ENCODE measurements at regions of chr17 and their contacts with region 1.

Region 1: GRCh38 chr17:44199553-44200477 is at the start of gene ATXN7L3:
- DNase-seq: peak in 1 of 2 donors; percentile 98
- H3K4me3 ChIP-seq: peak within 1 kb of the TSS; percentile 68 to 98
- H3K27ac ChIP-seq: peak within 1 kb of the TSS; percentile 98
- H3K4me1 ChIP-seq: peaks cover 31% of the 10 kb centered on the region
- H3K27me3 ChIP-seq: no peaks in the 10 kb centered on the region
- CTCF ChIP-seq: no peak
- POLR2A ChIP-seq: peak in 1 of 2 donors; percentile 19
- total RNA-seq, gene ATXN7L3: 27.3 TPM

Region 2: DNA sequence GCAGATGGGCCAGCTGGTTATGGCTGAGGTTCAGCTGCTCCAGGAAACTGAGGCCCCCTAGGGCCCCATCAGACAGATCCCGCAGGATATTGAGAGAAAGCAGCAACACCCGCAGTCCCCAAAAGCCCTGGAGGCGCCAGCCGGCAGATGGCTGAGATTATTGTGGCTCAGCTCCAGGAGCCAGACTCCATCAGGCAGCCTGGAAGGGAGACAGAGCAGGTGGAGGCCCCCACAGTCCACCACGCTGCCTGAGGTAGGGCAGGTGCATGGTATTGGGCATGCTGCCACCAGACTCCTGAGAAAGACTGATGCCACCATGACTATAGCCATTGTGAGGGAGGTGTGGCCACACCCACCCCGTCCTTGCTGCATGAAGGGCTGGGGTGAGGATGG is 175.5 kb before region 1 on chr17:
- intact Hi-C with region 1: no loop called
- DNase-seq: no peak
- H3K4me3 ChIP-seq: no peak overlapping the region
- H3K27ac ChIP-seq: no peak overlapping the region
- H3K4me1 ChIP-seq: no peaks in the 10 kb centered on the region
- H3K27me3 ChIP-seq: no peaks in the 10 kb centered on the region
- CTCF ChIP-seq: no peak
- POLR2A ChIP-seq: no peak

Region 3: GRCh38 chr17:44223541-44224071 is 23.8 kb after region 1 on chr17:
- intact Hi-C with region 1: loop called (anchors 1 kb)
- DNase-seq: no peak
- H3K4me3 ChIP-seq: no peak overlapping the region
- H3K27ac ChIP-seq: no peak overlapping the region
- H3K4me1 ChIP-seq: peaks cover 23% of the 10 kb centered on the region
- H3K27me3 ChIP-seq: no peaks in the 10 kb centered on the region
- CTCF ChIP-seq: no peak
- POLR2A ChIP-seq: no peak

Measured in vagina (tissue), 2 donors.